Endothelial cell of umbilical vein (primary cell): ENCODE measurements at regions of chr19 and their contacts with region 1.

Region 1: GRCh38 chr19:49640113-49640898 is at the start of gene RRAS:
- DNase-seq: peak; percentile 100
- H3K4me3 ChIP-seq: peak within 1 kb of the TSS; percentile 57 to 83 (median 72)
- H3K27ac ChIP-seq: peak within 1 kb of the TSS; percentile 99
- H3K4me1 ChIP-seq: peaks cover 33% of the 10 kb centered on the region
- H3K27me3 ChIP-seq: no peaks in the 10 kb centered on the region
- CTCF ChIP-seq: no peak
- POLR2A ChIP-seq: peak; percentile 93
- total RNA-seq, gene RRAS: 84.8 and 89.5 TPM in 2 replicates

Region 2: DNA sequence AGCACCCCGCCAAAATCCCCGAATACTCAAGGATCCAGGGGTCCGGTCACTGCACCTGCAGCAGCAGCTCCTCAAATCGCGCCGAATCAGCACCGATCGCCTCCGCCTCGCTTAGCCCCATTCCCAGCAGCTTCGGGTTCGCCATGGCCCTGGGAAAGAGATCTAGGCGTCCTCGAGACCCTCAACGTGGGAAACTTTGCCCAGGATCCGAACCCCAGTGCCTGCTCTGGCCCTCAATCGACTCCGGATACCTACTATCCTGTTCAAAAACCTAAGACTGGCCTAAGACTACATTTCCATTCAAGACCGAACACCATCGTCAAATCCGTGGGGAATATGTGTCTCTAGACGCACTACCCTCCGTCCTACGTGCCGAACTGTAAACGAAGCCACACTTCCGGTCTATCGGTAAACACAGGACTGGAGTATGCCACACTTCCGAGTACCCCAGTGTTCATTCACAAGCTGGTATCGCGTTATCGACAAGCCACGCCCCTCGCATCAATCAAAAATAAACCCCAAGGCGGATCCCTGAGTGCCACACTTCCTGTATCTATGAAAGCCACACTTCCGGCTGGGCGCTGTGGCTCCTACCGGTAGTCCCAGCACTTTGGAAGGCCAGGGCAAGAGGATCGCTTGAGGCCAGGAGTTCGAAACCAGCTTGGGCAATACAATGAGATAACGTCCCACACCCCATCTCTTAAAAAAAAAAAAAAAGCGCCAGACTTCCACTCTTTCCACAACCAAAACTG is 188.7 kb before region 1 on chr19 and contains the start of gene PIH1D1:
- CTCF ChIA-PET with region 1: no interaction called
- POLR2A ChIA-PET with region 1: no interaction called
- dilution Hi-C with region 1: no loop called
- intact Hi-C with region 1: loop called (anchors 5 kb)
- DNase-seq: peak; percentile 99
- H3K4me3 ChIP-seq: peak within 1 kb of the TSS; percentile 43 to 84 (median 80)
- H3K27ac ChIP-seq: peak within 1 kb of the TSS; percentile 83
- H3K4me1 ChIP-seq: peaks cover 11% of the 10 kb centered on the region
- H3K27me3 ChIP-seq: no peaks in the 10 kb centered on the region
- CTCF ChIP-seq: no peak
- POLR2A ChIP-seq: peak; percentile 93
- total RNA-seq, gene PIH1D1: 84.1 and 86.9 TPM in 2 replicates

Region 3: GRCh38 chr19:49497047-49497788 is 143.1 kb before region 1 on chr19:
- CTCF ChIA-PET with region 1: no interaction called
- POLR2A ChIA-PET with region 1: interaction called, 6 read pairs
- dilution Hi-C with region 1: no loop called
- intact Hi-C with region 1: loop called (anchors 2 kb)
- DNase-seq: peak; percentile 49
- H3K4me3 ChIP-seq: peak overlapping the region; percentile 85 to 100 (median 97)
- H3K27ac ChIP-seq: peak overlapping the region; percentile 91
- H3K4me1 ChIP-seq: peaks cover 36% of the 10 kb centered on the region
- H3K27me3 ChIP-seq: no peaks in the 10 kb centered on the region
- CTCF ChIP-seq: no peak
- POLR2A ChIP-seq: no peak

Region 4: GRCh38 chr19:49590071-49590970 is 50.0 kb before region 1 on chr19:
- CTCF ChIA-PET with region 1: no interaction called
- POLR2A ChIA-PET with region 1: interaction called, 11 read pairs
- dilution Hi-C with region 1: no loop called
- intact Hi-C with region 1: loop called (anchors 1 kb)
- DNase-seq: peak; percentile 96
- H3K4me3 ChIP-seq: peak overlapping the region; percentile 3 to 88 (median 45)
- H3K27ac ChIP-seq: peak overlapping the region; percentile 83
- H3K4me1 ChIP-seq: peaks cover 16% of the 10 kb centered on the region
- H3K27me3 ChIP-seq: no peaks in the 10 kb centered on the region
- CTCF ChIP-seq: peak in 1 of 2 donors; percentile 26
- POLR2A ChIP-seq: peak; percentile 85

Region 5: DNA sequence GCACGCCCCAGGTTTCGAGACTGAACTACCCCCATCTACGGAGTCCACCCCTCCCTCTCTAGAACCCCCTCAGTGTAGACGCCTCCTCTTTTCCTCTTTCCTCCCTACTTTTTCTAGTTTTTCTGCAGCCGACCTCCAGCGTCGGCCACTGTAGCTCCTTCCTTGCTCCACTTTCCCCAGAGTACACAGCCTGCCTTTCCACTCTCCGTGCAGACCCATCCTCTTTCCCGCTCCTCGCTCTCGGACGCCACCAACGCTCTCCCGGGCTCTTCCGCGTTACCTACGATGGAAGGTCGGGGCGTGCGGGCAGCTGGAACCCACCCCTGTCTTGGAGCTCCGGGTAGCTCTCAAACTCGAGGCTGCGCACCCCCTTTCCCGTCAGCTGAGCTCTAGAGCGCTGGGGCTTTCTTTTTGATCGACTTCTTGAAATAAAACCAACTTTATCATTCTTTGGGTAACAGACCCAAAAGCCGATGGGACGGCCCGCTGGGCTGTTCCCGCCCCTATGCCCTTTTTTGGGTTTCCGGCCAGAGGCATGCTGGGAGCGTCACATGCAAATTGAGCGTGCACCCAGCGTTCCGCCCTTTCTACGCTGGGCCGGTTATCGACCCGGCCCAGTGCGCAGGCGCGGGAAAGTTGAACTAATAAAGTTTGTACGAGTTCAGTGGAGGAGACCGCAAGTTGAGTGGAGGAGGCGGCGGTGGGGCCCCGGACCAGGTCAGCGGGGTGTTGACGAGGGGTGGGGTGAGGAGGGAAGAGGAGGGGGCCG is 25.2 kb after region 1 on chr19 and contains the starts of genes BCL2L12 and IRF3:
- CTCF ChIA-PET with region 1: interaction called, 9 read pairs
- POLR2A ChIA-PET with region 1: interaction called, 6 read pairs
- dilution Hi-C with region 1: no loop called
- intact Hi-C with region 1: loop called (anchors 1 kb)
- DNase-seq: peak; percentile 97
- H3K4me3 ChIP-seq: peak within 1 kb of the TSS; percentile 42 to 88 (median 67)
- H3K27ac ChIP-seq: peak within 1 kb of the TSS; percentile 35
- H3K4me1 ChIP-seq: peaks cover 8% of the 10 kb centered on the region
- H3K27me3 ChIP-seq: no peaks in the 10 kb centered on the region
- CTCF ChIP-seq: no peak
- POLR2A ChIP-seq: no peak
- total RNA-seq, gene BCL2L12: 52.4 and 58.5 TPM in 2 replicates
- total RNA-seq, gene IRF3: 73.5 and 79.1 TPM in 2 replicates

Region 6: GRCh38 chr19:49766007-49766937 is 126.0 kb after region 1 on chr19:
- CTCF ChIA-PET with region 1: no interaction called
- POLR2A ChIA-PET with region 1: interaction called, 3 read pairs
- dilution Hi-C with region 1: no loop called
- intact Hi-C with region 1: loop called (anchors 1 kb)
- DNase-seq: peak; percentile 100
- H3K4me3 ChIP-seq: peak overlapping the region in 2 of 3 experiments; percentile 49 to 97
- H3K27ac ChIP-seq: peak overlapping the region; percentile 41
- H3K4me1 ChIP-seq: peaks cover 12% of the 10 kb centered on the region
- H3K27me3 ChIP-seq: no peaks in the 10 kb centered on the region
- CTCF ChIP-seq: no peak
- POLR2A ChIP-seq: peak; percentile 72

Region 7: GRCh38 chr19:49929611-49930482 is 289.5 kb after region 1 on chr19:
- CTCF ChIA-PET with region 1: no interaction called
- POLR2A ChIA-PET with region 1: no interaction called
- dilution Hi-C with region 1: no loop called
- intact Hi-C with region 1: loop called (anchors 2 kb)
- DNase-seq: peak; percentile 99
- H3K4me3 ChIP-seq: peak overlapping the region; percentile 6 to 99 (median 91)
- H3K27ac ChIP-seq: peak overlapping the region; percentile 79
- H3K4me1 ChIP-seq: peaks cover 10% of the 10 kb centered on the region
- H3K27me3 ChIP-seq: no peaks in the 10 kb centered on the region
- CTCF ChIP-seq: no peak
- POLR2A ChIP-seq: peak; percentile 80